ENCODE measurements at regions of chr7 and their contacts with region 1.

Region 1: GRCh38 chr7:909358-910329 is 33.3 kb downstream of the GET4 start:
- DNase-seq: peak; percentile 87
- H3K4me3 ChIP-seq: peak overlapping the region; percentile 22
- H3K27ac ChIP-seq: peak overlapping the region; percentile 49
- H3K4me1 ChIP-seq: peaks cover 8% of the 10 kb centered on the region
- H3K27me3 ChIP-seq: no peaks in the 10 kb centered on the region
- CTCF ChIP-seq: no peak

Region 2: DNA sequence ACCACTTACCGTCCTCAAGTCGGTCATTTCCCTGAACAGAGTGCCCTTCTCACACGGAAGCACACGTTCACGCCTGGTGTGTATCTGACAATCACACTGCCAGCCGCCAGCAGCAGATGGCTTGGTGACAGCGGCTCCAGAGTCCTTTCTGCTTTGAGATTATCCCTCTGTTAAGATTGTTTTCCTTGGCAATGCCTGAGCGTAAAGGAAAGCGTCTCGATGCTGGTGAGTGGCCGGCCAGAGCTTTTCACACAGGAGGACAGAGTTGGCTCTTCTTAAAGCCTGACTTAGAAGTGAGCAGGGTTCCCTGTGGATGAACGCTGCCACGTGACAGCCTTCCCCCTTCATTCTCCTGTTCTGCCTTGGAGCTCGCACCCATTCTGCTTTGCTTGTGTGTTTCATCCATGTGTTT is 160.5 kb before region 1 on chr7:
- intact Hi-C with region 1: no loop called
- DNase-seq: no peak
- H3K4me3 ChIP-seq: no peak overlapping the region
- H3K27ac ChIP-seq: no peak overlapping the region
- H3K4me1 ChIP-seq: no peaks in the 10 kb centered on the region
- H3K27me3 ChIP-seq: no peaks in the 10 kb centered on the region
- CTCF ChIP-seq: no peak

Region 3: DNA sequence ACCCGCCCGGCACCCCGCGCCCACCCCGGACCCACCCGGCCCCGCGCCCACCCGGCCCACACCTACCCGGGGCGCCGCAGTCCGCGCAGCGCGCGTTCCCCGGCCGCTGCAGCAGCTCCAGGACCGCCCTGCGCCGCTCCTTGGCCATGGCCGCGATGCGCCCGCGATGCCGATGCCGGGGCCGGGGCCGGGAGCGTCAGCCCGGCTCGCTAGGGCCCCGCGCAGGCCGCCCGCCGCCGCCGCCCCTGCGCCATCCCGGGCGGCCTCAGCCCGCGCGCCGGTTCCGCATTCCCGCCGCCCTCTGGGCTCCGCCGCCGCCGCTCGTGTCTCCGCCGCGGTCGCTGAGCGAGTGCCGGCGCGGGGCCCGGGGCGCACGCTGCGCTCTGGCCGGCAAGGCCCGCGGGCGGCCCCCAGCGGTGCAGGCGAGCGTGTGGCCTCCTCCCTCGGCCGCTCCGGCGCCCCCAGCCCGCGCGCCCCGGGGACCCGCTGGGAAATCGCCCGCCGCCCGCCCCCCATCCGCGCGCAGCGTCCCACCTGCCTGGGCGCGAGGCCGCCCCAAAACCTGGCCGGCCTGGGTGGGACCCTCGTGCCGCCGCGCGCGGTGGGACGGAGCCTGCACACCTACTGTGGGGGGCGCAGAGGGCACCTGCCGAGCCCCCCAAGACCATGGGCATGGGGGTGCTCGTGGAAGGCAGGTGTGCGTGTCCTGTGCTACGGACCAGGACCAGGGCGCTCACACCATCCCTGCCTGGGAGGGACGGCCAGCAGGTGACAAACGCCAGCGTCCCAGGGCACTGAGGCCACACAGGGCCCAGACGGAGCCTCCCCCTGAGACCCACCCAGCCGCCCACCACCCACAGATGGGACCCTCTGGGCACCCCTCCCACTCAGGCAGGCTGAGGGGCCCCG is 44.9 kb after region 1 on chr7 and contains the start of gene ADAP1:
- intact Hi-C with region 1: loop called (anchors 2 kb)
- DNase-seq: peak; percentile 51
- H3K4me3 ChIP-seq: peak within 1 kb of the TSS; percentile 53
- H3K27ac ChIP-seq: peak within 1 kb of the TSS; percentile 82
- H3K4me1 ChIP-seq: peaks cover 4% of the 10 kb centered on the region
- H3K27me3 ChIP-seq: no peaks in the 10 kb centered on the region
- CTCF ChIP-seq: no peak
- total RNA-seq, gene ADAP1: 107 to 201 TPM

Region 4: GRCh38 chr7:974820-975681 is 65.4 kb after region 1 on chr7 and contains the start of gene COX19:
- intact Hi-C with region 1: loop called (anchors 5 kb)
- DNase-seq: peak; percentile 92
- H3K4me3 ChIP-seq: peak within 1 kb of the TSS; percentile 100
- H3K27ac ChIP-seq: peak within 1 kb of the TSS; percentile 96
- H3K4me1 ChIP-seq: peaks cover 20% of the 10 kb centered on the region
- H3K27me3 ChIP-seq: no peaks in the 10 kb centered on the region
- CTCF ChIP-seq: no peak
- total RNA-seq, gene COX19: 11.6 to 16.5 TPM

Measured in colonic mucosa (tissue), 4 donors.